ENCODE measurements at regions of chr1 and their contacts with region 1.

Region 1: DNA sequence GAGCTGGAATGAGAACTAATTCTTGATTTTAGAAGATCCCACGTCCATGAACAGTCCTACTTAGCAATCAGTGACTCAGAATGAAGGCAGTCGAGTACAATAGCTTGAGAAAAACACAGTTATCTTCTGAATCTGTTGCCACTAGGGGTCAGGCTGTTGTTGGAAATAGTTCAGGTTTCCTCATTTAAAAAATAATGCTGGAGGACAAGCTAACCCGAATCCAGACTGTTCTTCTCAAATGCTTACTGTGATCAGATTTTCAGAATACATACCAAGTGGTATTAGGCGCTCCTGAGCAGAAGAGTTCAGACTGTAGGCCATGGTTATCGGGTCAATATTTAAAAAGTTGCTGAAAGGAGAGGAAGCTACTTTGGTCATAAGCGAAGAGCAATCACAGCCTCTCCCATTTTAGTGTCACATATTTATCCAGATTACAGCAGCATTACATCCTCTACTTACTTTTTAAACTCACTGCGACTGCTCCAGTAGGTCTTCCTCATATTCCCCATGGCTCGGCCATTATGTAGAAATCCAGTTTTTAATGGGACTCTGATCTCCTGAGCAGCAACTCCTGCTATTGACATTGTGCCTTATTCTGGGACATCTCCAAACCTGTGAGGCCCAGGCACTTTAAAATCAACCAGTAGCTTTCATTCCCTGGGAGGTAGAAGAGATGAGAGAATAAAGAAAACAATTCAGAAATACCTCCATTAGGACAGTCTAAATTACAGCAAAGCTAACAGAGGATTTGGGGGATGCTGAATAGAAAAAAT is 10.9 kb downstream of the ERRFI1 start:
- DNase-seq: peak; percentile 71

Region 2: DNA sequence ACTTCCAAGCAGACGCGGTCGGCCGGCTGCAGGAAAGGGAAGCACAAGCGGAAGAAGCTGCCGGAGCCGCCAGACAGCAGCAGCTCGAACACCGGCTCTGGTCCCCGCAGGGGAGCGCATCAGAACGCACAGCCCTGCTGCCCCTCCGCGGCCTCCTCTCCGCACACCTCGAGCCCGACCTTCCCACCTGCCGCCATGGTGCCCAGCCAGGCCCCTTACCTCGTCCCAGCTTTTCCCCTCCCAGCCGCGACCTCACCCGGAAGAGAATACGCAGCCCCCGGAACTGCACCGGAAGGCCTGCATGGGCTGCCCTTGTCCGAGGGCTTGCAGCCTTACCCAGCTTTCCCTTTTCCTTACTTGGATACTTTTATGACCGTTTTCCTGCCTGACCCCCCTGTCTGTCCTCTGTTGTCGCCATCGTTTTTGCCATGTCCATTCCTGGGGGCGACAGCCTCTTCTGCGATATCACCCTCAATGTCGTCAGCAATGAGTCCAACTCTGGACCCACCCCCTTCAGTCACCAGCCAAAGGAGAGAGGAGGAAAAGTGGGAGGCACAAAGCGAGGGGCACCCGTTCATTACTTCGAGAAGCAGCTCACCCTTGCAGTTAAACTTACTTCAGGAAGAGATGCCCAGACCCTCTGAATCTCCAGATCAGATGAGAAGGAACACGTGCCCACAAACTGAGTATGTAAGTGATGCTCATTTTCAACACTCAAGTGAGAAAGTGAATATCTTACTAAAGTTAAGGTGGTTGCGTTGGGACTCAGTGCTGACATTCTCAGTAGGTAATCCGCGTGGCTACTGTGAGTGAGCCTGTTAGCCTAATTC is 187.9 kb before region 1 on chr1:
- in situ Hi-C with region 1: no loop called
- DNase-seq: no peak

Region 3: GRCh38 chr1:8169364-8170058 is 154.3 kb after region 1 on chr1:
- in situ Hi-C with region 1: loop called (anchors 10 kb)
- DNase-seq: peak; percentile 94

Region 4: DNA sequence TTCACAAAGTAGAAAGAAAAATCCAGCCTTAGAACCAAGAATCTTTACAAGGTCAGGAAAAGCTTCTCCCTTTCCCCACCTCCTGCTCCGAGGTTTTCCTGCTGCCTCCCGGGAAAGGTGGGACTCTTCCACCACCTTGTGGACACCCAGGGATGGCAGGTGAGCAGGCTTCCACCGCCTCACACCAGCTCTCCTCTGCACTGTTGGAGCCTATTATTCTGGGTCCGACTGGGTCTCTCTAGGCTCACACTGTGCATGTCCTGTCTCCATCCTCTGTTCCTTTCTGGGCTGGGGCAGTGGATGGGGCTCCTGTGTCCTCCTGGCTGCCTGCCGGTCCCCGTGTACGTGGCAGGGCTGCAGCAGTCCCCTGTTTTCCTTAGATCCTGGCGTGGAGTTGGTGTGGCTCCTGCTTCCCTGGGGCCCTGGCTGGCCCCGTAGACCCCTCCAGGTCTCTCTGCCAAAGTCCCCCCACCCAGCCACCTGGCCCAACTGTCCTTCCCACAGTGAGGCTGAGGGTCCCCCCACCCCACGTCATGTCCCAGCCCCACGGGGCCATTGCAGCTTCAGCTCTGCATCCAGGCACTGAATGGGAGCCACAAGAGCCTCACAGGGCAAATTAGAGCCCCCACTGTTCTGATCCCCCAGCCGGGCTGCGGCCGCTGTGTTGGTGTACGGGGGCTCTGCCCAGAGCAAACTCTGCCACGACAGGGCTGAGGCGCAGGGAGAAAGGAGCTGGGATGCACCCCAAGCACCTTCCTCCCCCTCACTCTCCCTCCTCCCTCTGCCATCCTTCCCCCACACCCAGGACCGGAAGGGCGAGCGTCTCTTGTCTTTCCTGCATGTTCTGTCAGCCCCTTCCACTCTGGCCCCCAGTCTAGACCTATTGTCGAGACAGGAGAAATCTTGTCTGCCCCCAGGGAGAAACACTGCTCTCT is 299.4 kb after region 1 on chr1:
- in situ Hi-C with region 1: loop called (anchors 10 kb)
- DNase-seq: peak; percentile 74